ENCODE measurements at regions of chr11 and their contacts with region 1.

Region 1: GRCh38 chr11:130861902-130862860 is 54.1 kb downstream of the SNX19 start:
- DNase-seq: peak; percentile 90 to 91 (median 91)
- ATAC-seq: peak; percentile 77
- H3K4me3 ChIP-seq: no peak overlapping the region
- H3K27ac ChIP-seq: no peak overlapping the region
- H3K4me1 ChIP-seq: peaks cover 0 to 20% (median 9%) of the 10 kb centered on the region in 4 donors
- H3K27me3 ChIP-seq: no peaks in the 10 kb centered on the region
- CTCF ChIP-seq: peak; percentile 100
- POLR2A ChIP-seq: no peak

Region 2: DNA sequence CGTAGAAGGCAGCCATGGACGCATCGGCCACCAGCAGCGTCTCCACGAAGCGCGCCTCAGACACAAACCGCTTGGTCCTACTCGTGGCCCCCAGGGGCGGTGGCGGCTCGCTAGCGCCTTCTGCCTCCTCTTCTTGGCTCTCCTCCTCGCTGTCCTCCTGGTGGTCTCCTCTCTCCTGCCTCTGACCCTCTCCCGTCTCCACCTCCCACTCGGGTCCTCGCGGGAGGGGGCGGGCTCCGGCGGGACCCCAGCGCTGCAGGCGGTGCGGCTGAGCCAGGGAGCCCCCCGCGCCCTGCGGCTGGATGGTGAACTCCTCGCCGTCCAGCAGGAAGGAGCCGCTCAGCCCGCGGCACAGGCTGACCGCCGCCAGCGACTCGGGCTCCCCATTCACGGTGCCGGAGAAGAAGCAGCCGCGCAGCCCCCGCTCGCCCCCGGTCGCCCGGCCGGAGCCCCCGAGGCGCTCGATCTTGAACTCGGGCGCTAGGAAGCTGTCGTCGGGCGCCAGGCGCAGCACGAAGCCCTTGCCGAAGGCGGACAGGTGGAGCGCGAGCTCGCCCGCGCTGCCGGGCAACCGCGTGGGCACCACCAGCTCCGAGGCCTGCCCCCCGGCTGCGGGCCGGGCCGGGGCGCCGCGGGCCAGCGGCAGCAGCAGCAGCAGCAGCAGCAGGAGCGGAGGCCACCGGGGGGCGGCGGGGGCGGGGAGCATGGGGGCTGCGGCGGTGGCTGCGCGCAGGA is 434.4 kb before region 1 on chr11:
- intact Hi-C with region 1: loop called in 1 of 2 experiments (anchors 5 kb)
- DNase-seq: no peak
- ATAC-seq: no peak
- H3K4me3 ChIP-seq: peak overlapping the region in 1 of 3 donors; percentile 27
- H3K27ac ChIP-seq: no peak overlapping the region
- H3K4me1 ChIP-seq: peaks cover 0 to 12% (median 2%) of the 10 kb centered on the region in 4 donors
- H3K27me3 ChIP-seq: peaks cover 6 to 13% of the 10 kb centered on the region in 2 donors
- CTCF ChIP-seq: no peak
- POLR2A ChIP-seq: no peak

Region 3: GRCh38 chr11:130448416-130449309 is 413.5 kb before region 1 on chr11 and contains the start of gene ADAMTS15:
- intact Hi-C with region 1: loop called in 1 of 2 experiments (anchors 10 kb)
- DNase-seq: peak in 2 of 3 donors; percentile 50 to 70
- ATAC-seq: peak; percentile 74 to 87 (median 84)
- H3K4me3 ChIP-seq: peak within 1 kb of the TSS; percentile 27 to 45 (median 42)
- H3K27ac ChIP-seq: no peak within 1 kb of the TSS
- H3K4me1 ChIP-seq: peaks cover 0 to 16% (median 0%) of the 10 kb centered on the region in 4 donors
- H3K27me3 ChIP-seq: peaks cover 0 to 6% of the 10 kb centered on the region in 2 donors
- CTCF ChIP-seq: no peak
- POLR2A ChIP-seq: no peak
- total RNA-seq, gene ADAMTS15: 0.19 to 1.1 (median 0.31) TPM in 5 of 6 experiments, not detected in the other

Measured in right lobe of liver (tissue), 6 donors.